ENCODE measurements at regions of chr2 and their contacts with region 1.

Region 1: GRCh38 chr2:85813982-85814801 is 60.4 kb downstream of the ATOH8 start:
- DNase-seq: peak; percentile 88
- H3K4me3 Mint-ChIP-seq: no peak overlapping the region
- H3K27ac Mint-ChIP-seq: no peak overlapping the region
- H3K4me1 Mint-ChIP-seq: no peaks in the 10 kb centered on the region
- H3K27me3 Mint-ChIP-seq: peaks cover 31% of the 10 kb centered on the region

Region 2: DNA sequence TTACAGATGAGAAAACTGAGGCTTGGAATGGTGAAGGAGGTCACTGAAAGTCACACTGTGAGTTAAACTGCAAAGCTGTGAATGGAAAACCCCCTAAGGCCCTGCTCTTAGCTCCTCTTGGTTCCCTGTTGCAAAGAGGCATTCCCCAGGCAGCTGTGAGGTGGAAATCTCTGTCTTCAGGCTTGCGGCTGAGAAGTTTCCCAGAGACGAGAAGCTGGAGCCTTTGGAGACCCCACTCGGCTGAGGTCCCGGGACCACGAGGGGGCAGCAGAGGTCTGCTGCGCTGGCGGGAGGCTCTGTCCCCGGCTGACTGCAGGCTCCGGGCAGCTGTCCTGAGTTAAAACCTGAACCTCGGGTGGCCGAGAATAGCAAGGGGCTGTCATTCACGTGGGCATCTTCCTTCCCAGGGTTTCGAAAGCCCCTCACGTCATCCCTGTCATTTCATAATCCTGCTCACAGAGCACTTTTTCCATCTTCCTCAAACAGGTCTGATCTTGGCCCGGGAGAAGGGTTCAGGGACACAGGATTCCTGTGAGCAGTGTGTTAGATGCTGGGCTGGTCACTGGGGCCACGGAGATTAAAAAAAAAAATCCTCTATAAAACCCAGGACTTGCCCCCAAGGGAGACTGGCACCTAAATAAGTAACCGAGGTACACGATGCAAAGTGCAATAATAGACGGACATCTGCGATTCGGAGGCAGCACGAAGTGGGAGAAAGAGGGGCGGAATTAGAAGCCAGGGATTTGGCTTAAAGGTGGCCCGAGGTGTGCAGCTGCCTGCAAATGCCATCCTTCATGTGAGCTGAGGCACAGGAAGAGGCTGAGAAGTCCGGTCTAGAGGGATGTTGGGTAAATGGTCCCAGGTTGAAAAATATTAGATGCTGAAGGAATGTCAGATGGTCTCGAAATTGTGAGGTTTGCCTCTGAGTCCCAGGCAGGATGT is 85.0 kb before region 1 on chr2:
- CTCF ChIA-PET with region 1: interaction called, 44 read pairs
- POLR2A ChIA-PET with region 1: interaction called, 3 read pairs
- DNase-seq: peak; percentile 76
- H3K4me3 Mint-ChIP-seq: no peak overlapping the region
- H3K27ac Mint-ChIP-seq: no peak overlapping the region
- H3K4me1 Mint-ChIP-seq: peaks cover 9% of the 10 kb centered on the region
- H3K27me3 Mint-ChIP-seq: peaks cover 32% of the 10 kb centered on the region

Region 3: GRCh38 chr2:85750587-85751575 is 63.3 kb before region 1 on chr2:
- CTCF ChIA-PET with region 1: interaction called, 47 read pairs
- POLR2A ChIA-PET with region 1: interaction called, 4 read pairs
- DNase-seq: peak; percentile 68
- H3K4me3 Mint-ChIP-seq: no peak overlapping the region
- H3K27ac Mint-ChIP-seq: no peak overlapping the region
- H3K4me1 Mint-ChIP-seq: peaks cover 19% of the 10 kb centered on the region
- H3K27me3 Mint-ChIP-seq: peaks cover 85% of the 10 kb centered on the region

Measured in activated CD4-positive, alpha-beta memory T cell treated with anti-CD3 and anti-CD28 coated beads, Interleukin-2, amount 10 ng/mL, durations not matched to agents 7 days and 5 days (primary cell).